HEK293T (cell line): ENCODE measurements at regions of chr22 and their contacts with region 1.

Region 1: GRCh38 chr22:37270928-37271650 is 11.2 kb upstream of the CYTH4 start:
- DNase-seq: no peak

Region 2: DNA sequence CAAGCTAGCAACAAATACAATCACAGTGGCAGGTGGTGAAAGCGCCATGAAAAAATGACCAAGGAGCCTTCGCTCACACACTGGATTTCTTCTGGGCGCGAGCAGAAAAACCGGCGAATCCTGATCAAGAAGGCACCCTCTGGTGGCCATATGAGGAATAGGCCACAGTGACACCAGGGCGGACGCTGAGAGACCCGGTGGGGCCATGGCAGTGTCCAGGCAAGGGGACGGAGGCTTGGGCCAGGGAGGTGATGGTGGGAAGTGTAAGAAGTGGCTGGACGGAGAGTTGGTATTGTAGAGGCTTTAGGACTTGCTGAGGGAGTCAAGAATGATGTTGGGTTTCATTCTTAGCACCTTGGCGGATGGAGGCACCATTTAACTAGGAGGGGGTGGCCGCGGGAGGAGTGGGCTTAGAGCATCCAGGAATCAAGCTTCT is 10.2 kb before region 1 on chr22:
- CTCF ChIA-PET with region 1: interaction called, 13 read pairs
- POLR2A ChIA-PET with region 1: interaction called, 3 read pairs
- DNase-seq: peak; percentile 84

Region 3: GRCh38 chr22:37345863-37346504 is 74.9 kb after region 1 on chr22:
- CTCF ChIA-PET with region 1: no interaction called
- POLR2A ChIA-PET with region 1: no interaction called
- DNase-seq: no peak